Prostate gland (tissue), 2 donors: ENCODE measurements at regions of chr7 and their contacts with region 1.

Region 1: DNA sequence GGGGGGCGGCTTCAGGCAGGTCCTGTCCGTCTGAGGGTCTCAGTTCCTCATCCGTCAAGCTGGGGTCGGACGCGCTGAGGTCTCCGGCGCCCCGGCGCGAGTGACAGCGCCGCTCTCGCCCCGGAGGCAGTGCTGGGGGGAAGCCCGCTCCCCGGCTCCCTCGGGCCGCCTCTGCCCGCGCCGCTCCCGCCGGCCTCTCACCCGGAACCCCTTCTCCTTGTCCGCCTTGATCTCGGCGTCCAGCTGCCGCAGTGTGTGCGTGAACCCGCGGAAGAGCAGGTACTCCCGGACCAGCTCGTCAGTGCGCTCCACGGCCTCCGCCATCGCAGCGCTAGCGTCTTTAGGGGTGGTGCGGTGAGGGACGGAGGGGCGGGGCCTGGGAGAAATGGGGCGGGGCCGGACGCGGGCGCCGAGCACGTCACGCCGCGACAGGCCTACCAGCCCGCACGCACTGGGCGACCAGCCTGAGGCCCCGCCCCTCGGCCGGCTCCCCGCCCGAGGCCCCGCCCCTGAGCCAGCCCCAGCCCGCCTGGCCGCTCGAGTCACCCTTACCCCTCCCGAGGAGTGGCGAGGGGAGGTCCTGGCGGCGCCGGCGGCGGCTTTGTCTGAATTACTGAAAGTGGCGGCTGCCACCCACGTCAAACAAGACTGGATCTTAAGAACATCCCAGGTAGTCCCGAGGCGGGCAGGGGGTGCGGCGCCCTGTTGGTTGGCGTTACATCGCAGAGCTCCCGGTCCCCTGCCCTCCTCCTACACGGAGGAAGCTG is at the start of gene WDR91:
- DNase-seq: peak; percentile 96
- H3K4me3 ChIP-seq: peak within 1 kb of the TSS; percentile 81 to 86
- H3K27ac ChIP-seq: peak within 1 kb of the TSS; percentile 89 to 95
- H3K4me1 ChIP-seq: no peaks in the 10 kb centered on the region
- H3K27me3 ChIP-seq: no peaks in the 10 kb centered on the region
- CTCF ChIP-seq: peak in 1 of 4 experiments; percentile 13
- POLR2A ChIP-seq: peak; percentile 92
- total RNA-seq, gene WDR91: 13.6 to 49.1 TPM

Region 2: DNA sequence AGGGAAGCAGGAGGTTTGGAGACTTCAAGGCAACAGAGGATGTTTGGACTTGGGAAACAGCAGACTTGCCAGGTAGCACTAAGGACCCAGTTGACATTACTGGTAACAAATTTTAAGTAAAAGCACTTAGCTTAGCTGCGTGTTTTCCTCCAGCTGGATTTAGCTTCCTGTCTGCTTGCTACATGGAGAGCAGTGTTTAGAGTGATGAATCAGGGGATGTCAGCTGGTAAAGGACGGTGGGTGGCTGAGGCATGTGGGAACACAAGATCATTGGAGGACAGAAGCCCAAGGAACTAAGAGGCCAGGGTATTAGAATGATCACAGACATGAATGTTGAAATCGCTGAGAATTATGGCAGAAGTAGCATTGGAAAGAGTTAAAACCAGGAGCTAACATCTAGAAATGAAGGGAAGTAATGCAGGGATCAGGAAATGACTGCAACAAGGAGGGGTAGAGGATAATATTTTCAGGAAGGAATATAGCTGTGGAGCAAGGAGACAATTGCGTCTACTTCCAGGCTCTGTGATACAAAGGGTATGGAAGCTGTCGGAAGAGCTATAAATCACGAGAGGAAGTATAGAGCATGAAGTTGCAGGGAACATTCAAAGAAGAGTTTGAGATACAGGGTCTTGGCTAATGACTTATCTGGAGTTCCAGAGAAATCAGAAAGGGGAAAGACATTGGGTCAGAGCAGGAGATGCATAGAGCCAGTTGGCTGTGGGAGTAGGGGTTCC is 397.5 kb before region 1 on chr7:
- intact Hi-C with region 1: no loop called
- DNase-seq: no peak
- H3K4me3 ChIP-seq: no peak overlapping the region
- H3K27ac ChIP-seq: no peak overlapping the region
- H3K4me1 ChIP-seq: no peaks in the 10 kb centered on the region
- H3K27me3 ChIP-seq: no peaks in the 10 kb centered on the region
- CTCF ChIP-seq: no peak
- POLR2A ChIP-seq: no peak

Region 3: DNA sequence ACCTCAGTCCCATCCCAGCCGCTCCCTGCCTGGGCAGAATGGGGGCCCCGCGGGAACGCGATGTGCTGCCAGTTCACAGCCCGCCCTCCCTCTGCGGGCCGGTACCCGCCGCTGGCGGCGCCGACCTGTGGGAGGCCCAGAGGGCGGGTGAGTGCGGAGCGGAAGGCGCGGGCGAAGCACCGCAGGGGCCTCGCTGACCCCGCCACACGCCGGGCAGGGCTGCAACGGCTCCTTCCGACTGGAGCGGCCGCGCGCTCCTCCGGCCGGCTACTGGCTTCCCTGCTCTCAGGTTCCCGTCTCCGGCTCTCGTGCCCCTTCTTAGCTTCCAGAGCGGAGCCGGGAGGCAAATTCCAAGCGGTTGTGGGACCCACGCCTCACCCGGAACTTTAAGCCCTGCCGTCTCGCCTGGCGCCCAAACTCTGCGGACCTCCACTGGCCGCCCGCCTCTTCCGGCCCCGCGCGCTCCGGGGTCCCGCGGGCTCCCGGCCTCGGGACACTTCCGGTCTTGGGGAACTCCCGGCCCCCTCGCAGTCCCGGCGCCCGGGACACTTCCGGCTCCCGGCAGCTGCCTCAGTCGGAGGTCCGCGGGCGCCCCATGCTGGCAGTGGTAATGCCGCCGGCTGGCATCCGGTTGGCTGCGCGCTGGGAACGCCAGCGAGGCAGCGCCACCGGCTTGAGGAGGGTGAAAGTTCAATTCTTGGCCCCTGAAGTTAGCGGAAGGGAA is 40.9 kb before region 1 on chr7 and contains the start of gene CYREN:
- intact Hi-C with region 1: loop called (anchors 5 kb)
- DNase-seq: peak; percentile 92
- H3K4me3 ChIP-seq: peak within 1 kb of the TSS; percentile 69 to 72
- H3K27ac ChIP-seq: peak within 1 kb of the TSS; percentile 90 to 91
- H3K4me1 ChIP-seq: peaks cover 3% of the 10 kb centered on the region
- H3K27me3 ChIP-seq: no peaks in the 10 kb centered on the region
- CTCF ChIP-seq: peak; percentile 62 to 92 (median 82)
- POLR2A ChIP-seq: peak; percentile 51
- total RNA-seq, gene CYREN: 44.5 to 53.6 TPM

Region 4: DNA sequence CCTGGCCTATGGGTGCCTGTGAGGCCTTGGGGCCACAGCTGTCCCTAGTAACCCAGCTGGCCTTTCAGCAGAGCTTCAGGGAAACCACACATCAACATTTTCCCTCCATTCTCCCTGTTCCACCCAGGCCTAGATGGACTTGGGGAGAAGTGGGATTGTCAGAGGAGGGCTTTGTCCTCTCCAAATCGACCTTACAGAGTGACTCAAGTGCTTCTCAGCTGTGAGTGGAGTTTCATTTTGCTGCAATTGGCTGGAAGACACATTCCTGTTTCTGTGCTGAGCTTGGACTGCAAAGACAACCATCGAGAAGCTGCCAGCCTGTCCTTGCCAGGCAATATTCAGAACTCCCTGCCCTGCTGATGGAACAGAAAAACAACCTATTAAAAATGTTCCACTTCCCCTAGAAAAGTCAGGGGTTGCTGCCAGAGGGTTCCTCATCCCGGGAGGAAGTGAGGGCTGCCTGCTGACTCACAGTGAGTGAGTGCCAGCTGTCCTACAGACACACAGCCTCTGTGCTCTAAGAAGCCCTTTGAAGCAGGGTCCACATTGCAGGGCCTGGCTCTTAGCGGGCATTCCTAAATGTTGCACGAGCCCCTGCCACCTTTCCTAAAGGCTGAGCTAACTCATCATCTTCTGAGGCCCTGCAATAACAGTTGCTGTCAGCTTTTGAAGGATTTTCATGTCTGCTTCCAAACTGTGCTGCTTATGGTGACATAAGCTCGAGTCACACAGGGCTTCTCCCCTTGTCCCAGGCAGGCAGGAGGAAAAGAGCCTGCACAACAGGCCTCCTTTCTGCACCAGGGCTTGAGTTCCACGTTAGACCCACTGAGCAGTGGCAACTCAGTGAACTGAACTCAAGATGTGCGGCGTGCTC is 42.8 kb after region 1 on chr7:
- intact Hi-C with region 1: loop called (anchors 5 kb)
- DNase-seq: peak; percentile 60
- H3K4me3 ChIP-seq: no peak overlapping the region
- H3K27ac ChIP-seq: peak overlapping the region; percentile 62 to 74
- H3K4me1 ChIP-seq: no peaks in the 10 kb centered on the region
- H3K27me3 ChIP-seq: no peaks in the 10 kb centered on the region
- CTCF ChIP-seq: no peak
- POLR2A ChIP-seq: no peak